Panc1 (cell line): ENCODE measurements at regions of chr22 and their contacts with region 1.

Region 1: DNA sequence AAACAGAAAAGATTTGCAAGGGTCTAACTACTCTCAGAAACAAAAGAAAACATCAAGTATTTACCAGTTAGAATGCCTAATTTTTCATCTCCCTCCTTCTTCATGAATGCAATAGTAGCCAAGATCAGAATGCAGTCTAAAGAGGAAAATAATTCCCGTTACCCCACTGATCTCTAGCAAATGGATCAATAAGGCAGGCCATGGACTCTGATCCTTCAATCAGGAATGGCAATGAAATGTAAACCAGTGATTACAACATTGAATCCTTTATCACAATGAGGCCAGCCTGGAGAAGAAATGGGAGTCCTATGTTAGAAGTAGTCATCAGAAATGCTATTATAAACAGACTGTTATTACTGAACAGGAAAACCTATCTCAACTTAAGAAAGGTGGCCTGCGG is 106.6 kb downstream of the APOL5 start:
- DNase-seq: no peak
- ATAC-seq: no peak
- H3K4me3 ChIP-seq: no peak overlapping the region
- H3K27ac ChIP-seq: no peak overlapping the region
- H3K4me1 ChIP-seq: peaks cover 7% of the 10 kb centered on the region
- H3K27me3 ChIP-seq: no peaks in the 10 kb centered on the region
- CTCF ChIP-seq: no peak

Region 2: GRCh38 chr22:35552196-35552842 is 271.9 kb before region 1 on chr22:
- CTCF ChIA-PET with region 1: no interaction called
- POLR2A ChIA-PET with region 1: interaction called, 10 read pairs
- in situ Hi-C with region 1: no loop called
- intact Hi-C with region 1: no loop called
- DNase-seq: no peak
- ATAC-seq: peak; percentile 69
- H3K4me3 ChIP-seq: no peak overlapping the region
- H3K27ac ChIP-seq: no peak overlapping the region
- H3K4me1 ChIP-seq: peaks cover 5% of the 10 kb centered on the region; the same call in 1 of the 2 replicates
- H3K27me3 ChIP-seq: no peaks in the 10 kb centered on the region
- CTCF ChIP-seq: no peak

Region 3: DNA sequence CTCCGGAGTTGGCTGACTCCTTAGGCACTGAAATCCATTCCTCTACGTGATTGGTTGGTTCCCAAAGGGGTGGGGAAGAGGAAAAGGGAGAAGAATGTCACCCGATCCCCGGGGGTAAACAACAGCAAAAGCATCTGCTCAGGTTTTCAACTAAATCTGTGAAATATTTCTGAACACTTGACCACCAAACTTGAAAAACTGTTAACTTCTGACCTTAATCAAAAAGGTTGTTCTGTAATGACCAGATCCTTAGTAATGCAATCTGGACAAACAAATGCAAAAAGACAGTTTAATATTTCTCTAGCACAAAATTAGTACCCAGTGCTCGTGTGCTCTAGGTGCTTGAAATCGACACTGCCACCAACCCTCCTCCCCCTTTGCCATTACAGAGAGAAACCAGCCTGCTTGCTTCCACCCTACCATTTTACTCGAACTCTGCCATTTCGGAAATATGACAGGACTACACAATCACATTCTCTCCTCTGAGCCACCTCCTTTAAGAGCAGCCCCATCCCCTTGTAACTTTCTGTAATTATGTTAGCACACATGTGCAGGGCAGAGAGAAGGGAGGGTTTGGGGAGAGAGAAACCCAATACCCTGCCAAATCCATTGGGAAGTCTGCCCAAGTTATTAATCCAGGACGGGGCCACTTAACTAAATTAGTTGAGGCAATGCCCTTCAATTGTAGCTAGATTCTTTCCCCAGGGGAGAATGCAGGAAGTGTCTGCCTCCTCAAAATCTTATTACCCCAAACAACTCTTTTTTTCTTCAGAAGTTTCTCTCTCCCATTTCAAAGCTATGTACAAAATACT is 90.6 kb after region 1 on chr22:
- CTCF ChIA-PET with region 1: interaction called, 11 read pairs
- POLR2A ChIA-PET with region 1: no interaction called
- in situ Hi-C with region 1: no loop called
- intact Hi-C with region 1: no loop called
- DNase-seq: peak; percentile 30
- ATAC-seq: peak; percentile 91
- H3K4me3 ChIP-seq: peak overlapping the region; percentile 31 to 56
- H3K27ac ChIP-seq: peak overlapping the region; percentile 74
- H3K4me1 ChIP-seq: peaks cover 17% of the 10 kb centered on the region
- H3K27me3 ChIP-seq: no peaks in the 10 kb centered on the region
- CTCF ChIP-seq: no peak